Aorta (tissue), 5 donors: ENCODE measurements at regions of chr6 and their contacts with region 1.

Region 1: GRCh38 chr6:29705389-29706231 is 17.6 kb upstream of the HLA-F start:
- DNase-seq: no peak
- ATAC-seq: no peak
- H3K4me3 ChIP-seq: no peak overlapping the region
- H3K27ac ChIP-seq: no peak overlapping the region
- H3K4me1 ChIP-seq: no peaks in the 10 kb centered on the region
- H3K27me3 ChIP-seq: peaks cover 0 to 2% of the 10 kb centered on the region in 2 donors

Region 2: GRCh38 chr6:29647927-29648642 is 57.5 kb before region 1 on chr6:
- intact Hi-C with region 1: no loop called
- DNase-seq: no peak
- ATAC-seq: no peak
- H3K4me3 ChIP-seq: no peak overlapping the region
- H3K27ac ChIP-seq: no peak overlapping the region
- H3K4me1 ChIP-seq: no peaks in the 10 kb centered on the region
- H3K27me3 ChIP-seq: no peaks in the 10 kb centered on the region

Region 3: GRCh38 chr6:29834564-29835436 is 129.2 kb after region 1 on chr6:
- intact Hi-C with region 1: loop called (anchors 1 to 2 kb)
- DNase-seq: peak in 1 of 2 donors; percentile 84
- ATAC-seq: peak; percentile 70
- H3K4me3 ChIP-seq: no peak overlapping the region
- H3K27ac ChIP-seq: no peak overlapping the region
- H3K4me1 ChIP-seq: no peaks in the 10 kb centered on the region
- H3K27me3 ChIP-seq: no peaks in the 10 kb centered on the region

Region 4: GRCh38 chr6:30006170-30007131 is 300.8 kb after region 1 on chr6:
- intact Hi-C with region 1: loop called (anchors 10 kb)
- DNase-seq: peak; percentile 68 to 85
- ATAC-seq: peak; percentile 84
- H3K4me3 ChIP-seq: peak overlapping the region; percentile 23 to 29
- H3K27ac ChIP-seq: no peak overlapping the region
- H3K4me1 ChIP-seq: no peaks in the 10 kb centered on the region
- H3K27me3 ChIP-seq: no peaks in the 10 kb centered on the region

Region 5: GRCh38 chr6:30013291-30013922 is 307.8 kb after region 1 on chr6:
- intact Hi-C with region 1: loop called (anchors 10 kb)
- DNase-seq: peak in 1 of 2 donors; percentile 50
- ATAC-seq: peak; percentile 78
- H3K4me3 ChIP-seq: no peak overlapping the region
- H3K27ac ChIP-seq: no peak overlapping the region
- H3K4me1 ChIP-seq: no peaks in the 10 kb centered on the region
- H3K27me3 ChIP-seq: no peaks in the 10 kb centered on the region